CD14-positive monocyte (primary cell): ENCODE measurements at regions of chr12 and their contacts with region 1.

Region 1: DNA sequence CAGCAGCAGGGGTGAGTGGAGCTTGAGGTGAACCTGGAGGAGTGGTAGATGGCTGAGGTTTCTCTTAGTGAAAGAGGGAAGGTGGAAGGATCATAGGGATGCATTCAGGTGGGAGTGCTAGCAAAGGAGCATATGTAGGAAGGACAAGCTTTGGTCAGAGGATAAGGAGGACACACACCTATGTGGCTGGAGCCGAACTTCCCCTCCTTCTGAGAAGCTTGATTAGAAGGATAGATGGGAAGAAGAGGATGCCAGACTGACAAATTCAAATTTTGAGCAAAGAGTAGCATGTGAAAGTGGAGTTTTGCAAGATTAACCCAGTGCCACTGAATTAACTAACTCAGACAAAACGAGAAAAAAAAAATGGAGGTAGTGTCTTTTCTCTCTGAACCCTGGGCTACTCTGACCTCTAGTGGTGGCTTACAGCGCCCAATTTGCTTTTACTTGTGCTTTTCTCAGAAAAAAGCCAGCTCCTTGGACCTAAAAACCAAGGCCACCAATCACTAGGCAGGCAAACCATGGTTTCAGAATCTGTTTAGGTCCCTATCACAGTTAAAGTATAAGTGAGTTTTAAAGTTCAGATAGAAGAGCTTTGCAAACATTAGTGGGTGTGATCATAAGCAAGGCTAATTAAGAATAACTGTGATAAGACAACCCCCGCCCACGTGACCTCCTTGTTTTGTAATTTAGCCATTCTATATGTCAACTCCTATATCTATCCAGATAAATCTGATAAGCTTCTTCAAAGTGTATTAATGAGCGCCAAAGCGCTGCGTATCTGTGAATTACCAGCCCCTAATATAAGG is 15.5 kb downstream of the EMP1 start:
- DNase-seq: peak; percentile 62 to 79 (median 70)
- H3K4me3 ChIP-seq: no peak overlapping the region
- H3K4me3 Mint-ChIP-seq: peak overlapping the region in 1 of 2 donors; percentile 62
- H3K27ac ChIP-seq: no peak overlapping the region
- H3K27ac Mint-ChIP-seq: peak overlapping the region in 3 of 7 donors; percentile 5 to 15 (median 14)
- H3K4me1 ChIP-seq: peaks cover 20 to 21% of the 10 kb centered on the region in 2 donors
- H3K4me1 Mint-ChIP-seq: peaks cover 25% of the 10 kb centered on the region
- H3K27me3 ChIP-seq: no peaks in the 10 kb centered on the region
- H3K27me3 Mint-ChIP-seq: peaks cover 0 to 11% (median 7%) of the 10 kb centered on the region in 3 donors
- CTCF ChIP-seq: peak; percentile 81

Region 2: DNA sequence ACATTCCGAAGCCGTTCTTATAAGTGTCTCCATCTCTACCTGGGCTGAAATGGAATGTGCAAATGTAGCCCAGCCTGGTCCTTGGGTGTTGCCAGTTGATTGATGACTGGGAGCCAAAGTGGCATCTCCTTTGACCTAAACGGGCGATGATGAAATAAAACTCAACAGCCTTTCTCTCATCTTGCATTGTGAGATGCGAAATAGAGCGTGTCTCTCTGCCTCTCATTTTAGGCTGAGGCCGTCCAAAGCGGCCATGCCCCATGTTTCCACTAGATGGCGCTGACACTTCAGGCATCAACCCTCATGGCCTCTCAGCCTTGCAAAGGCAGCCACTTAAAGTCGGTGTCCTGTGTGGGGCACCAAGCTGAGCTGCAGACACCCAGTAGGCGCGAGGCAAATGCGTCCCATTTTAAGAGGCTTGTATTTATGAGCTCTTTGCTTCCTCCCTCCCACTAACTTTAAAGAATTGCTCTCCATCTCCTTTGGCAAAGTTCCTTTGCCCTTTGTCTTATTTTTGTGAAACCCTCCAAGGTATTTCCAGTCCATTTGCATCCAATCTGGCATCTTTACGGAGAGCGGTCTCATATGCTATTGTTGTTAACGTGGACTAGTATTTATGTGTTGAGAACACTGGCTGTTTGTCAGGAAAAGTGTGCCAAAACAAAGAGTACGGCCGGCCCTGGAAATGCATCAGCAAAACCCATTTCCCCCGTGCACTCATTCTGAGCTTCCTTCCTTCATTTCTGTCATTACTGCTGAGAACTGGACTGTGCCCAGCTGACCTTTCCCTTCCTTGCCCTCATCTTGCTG is 295.7 kb before region 1 on chr12:
- intact Hi-C with region 1: loop called (anchors 5 kb)
- DNase-seq: peak; percentile 67 to 75 (median 72)
- H3K4me3 ChIP-seq: peak overlapping the region in 1 of 3 experiments; percentile 45
- H3K4me3 Mint-ChIP-seq: peak overlapping the region; percentile 4 to 77
- H3K27ac ChIP-seq: no peak overlapping the region
- H3K27ac Mint-ChIP-seq: no peak overlapping the region
- H3K4me1 ChIP-seq: peaks cover 8 to 9% of the 10 kb centered on the region in 2 donors
- H3K4me1 Mint-ChIP-seq: peaks cover 20% of the 10 kb centered on the region
- H3K27me3 ChIP-seq: no peaks in the 10 kb centered on the region
- H3K27me3 Mint-ChIP-seq: peaks cover 0 to 10% (median 6%) of the 10 kb centered on the region in 3 donors
- CTCF ChIP-seq: peak; percentile 92

Region 3: GRCh38 chr12:12983420-12984035 is 228.5 kb before region 1 on chr12:
- intact Hi-C with region 1: loop called in 1 of 2 experiments (anchors 5 kb)
- DNase-seq: no peak
- H3K4me3 ChIP-seq: no peak overlapping the region
- H3K4me3 Mint-ChIP-seq: no peak overlapping the region
- H3K27ac ChIP-seq: no peak overlapping the region
- H3K27ac Mint-ChIP-seq: no peak overlapping the region
- H3K4me1 ChIP-seq: no peaks in the 10 kb centered on the region
- H3K4me1 Mint-ChIP-seq: no peaks in the 10 kb centered on the region
- H3K27me3 ChIP-seq: no peaks in the 10 kb centered on the region
- H3K27me3 Mint-ChIP-seq: peaks cover 0 to 1% (median 0%) of the 10 kb centered on the region in 3 donors
- CTCF ChIP-seq: peak; percentile 57

Region 4: GRCh38 chr12:12999959-13000615 is 212.0 kb before region 1 on chr12 and contains the start of gene HEBP1:
- intact Hi-C with region 1: loop called in 1 of 2 experiments (anchors 5 kb)
- DNase-seq: peak; percentile 87 to 94 (median 92)
- H3K4me3 ChIP-seq: peak within 1 kb of the TSS; percentile 77 to 91 (median 89)
- H3K4me3 Mint-ChIP-seq: peak within 1 kb of the TSS; percentile 91 to 98
- H3K27ac ChIP-seq: peak within 1 kb of the TSS; percentile 95 to 97
- H3K27ac Mint-ChIP-seq: peak within 1 kb of the TSS; percentile 96 to 99 (median 98)
- H3K4me1 ChIP-seq: peaks cover 39 to 44% of the 10 kb centered on the region in 2 donors
- H3K4me1 Mint-ChIP-seq: peaks cover 68% of the 10 kb centered on the region
- H3K27me3 ChIP-seq: no peaks in the 10 kb centered on the region
- H3K27me3 Mint-ChIP-seq: peaks cover 0 to 3% (median 0%) of the 10 kb centered on the region in 3 donors
- CTCF ChIP-seq: no peak
- polyA plus RNA-seq, gene HEBP1: 33.4 to 89.3 (median 71.3) TPM

Region 5: GRCh38 chr12:13154027-13154538 is 58.0 kb before region 1 on chr12:
- intact Hi-C with region 1: loop called in 1 of 2 experiments (anchors 10 kb)
- DNase-seq: peak; percentile 35 to 62 (median 52)
- H3K4me3 ChIP-seq: peak overlapping the region in 1 of 3 experiments; percentile 29
- H3K4me3 Mint-ChIP-seq: peak overlapping the region; percentile 18 to 46
- H3K27ac ChIP-seq: peak overlapping the region in 1 of 2 donors; percentile 34
- H3K27ac Mint-ChIP-seq: peak overlapping the region; percentile 43 to 85 (median 70)
- H3K4me1 ChIP-seq: peaks cover 13 to 15% of the 10 kb centered on the region in 2 donors
- H3K4me1 Mint-ChIP-seq: peaks cover 26% of the 10 kb centered on the region
- H3K27me3 ChIP-seq: no peaks in the 10 kb centered on the region
- H3K27me3 Mint-ChIP-seq: peaks cover 0 to 2% (median 2%) of the 10 kb centered on the region in 3 donors
- CTCF ChIP-seq: no peak